MCF 10A (cell line): ENCODE measurements at regions of chr4 and their contacts with region 1.

Region 1: GRCh38 chr4:112245383-112245782 is 13.8 kb downstream of the AP1AR start:
- DNase-seq: peak; percentile 7
- H3K4me3 Mint-ChIP-seq: no peak overlapping the region
- H3K27ac Mint-ChIP-seq: no peak overlapping the region
- H3K4me1 Mint-ChIP-seq: peaks cover 7% of the 10 kb centered on the region
- H3K27me3 Mint-ChIP-seq: no peaks in the 10 kb centered on the region
- CTCF ChIP-seq: no peak

Region 2: GRCh38 chr4:112257098-112257497 is 11.7 kb after region 1 on chr4:
- CTCF ChIA-PET with region 1: no interaction called
- POLR2A ChIA-PET with region 1: interaction called, 10 read pairs
- intact Hi-C with region 1: no loop called
- DNase-seq: no peak
- H3K4me3 Mint-ChIP-seq: no peak overlapping the region
- H3K27ac Mint-ChIP-seq: no peak overlapping the region
- H3K4me1 Mint-ChIP-seq: no peaks in the 10 kb centered on the region
- H3K27me3 Mint-ChIP-seq: no peaks in the 10 kb centered on the region
- CTCF ChIP-seq: no peak

Region 3: GRCh38 chr4:112677519-112678091 is 432.2 kb after region 1 on chr4:
- CTCF ChIA-PET with region 1: no interaction called
- POLR2A ChIA-PET with region 1: no interaction called
- intact Hi-C with region 1: no loop called
- DNase-seq: no peak
- H3K4me3 Mint-ChIP-seq: no peak overlapping the region
- H3K27ac Mint-ChIP-seq: no peak overlapping the region
- H3K4me1 Mint-ChIP-seq: no peaks in the 10 kb centered on the region
- H3K27me3 Mint-ChIP-seq: no peaks in the 10 kb centered on the region
- CTCF ChIP-seq: no peak